ENCODE measurements at regions of chr12 and their contacts with region 1.

Region 1: DNA sequence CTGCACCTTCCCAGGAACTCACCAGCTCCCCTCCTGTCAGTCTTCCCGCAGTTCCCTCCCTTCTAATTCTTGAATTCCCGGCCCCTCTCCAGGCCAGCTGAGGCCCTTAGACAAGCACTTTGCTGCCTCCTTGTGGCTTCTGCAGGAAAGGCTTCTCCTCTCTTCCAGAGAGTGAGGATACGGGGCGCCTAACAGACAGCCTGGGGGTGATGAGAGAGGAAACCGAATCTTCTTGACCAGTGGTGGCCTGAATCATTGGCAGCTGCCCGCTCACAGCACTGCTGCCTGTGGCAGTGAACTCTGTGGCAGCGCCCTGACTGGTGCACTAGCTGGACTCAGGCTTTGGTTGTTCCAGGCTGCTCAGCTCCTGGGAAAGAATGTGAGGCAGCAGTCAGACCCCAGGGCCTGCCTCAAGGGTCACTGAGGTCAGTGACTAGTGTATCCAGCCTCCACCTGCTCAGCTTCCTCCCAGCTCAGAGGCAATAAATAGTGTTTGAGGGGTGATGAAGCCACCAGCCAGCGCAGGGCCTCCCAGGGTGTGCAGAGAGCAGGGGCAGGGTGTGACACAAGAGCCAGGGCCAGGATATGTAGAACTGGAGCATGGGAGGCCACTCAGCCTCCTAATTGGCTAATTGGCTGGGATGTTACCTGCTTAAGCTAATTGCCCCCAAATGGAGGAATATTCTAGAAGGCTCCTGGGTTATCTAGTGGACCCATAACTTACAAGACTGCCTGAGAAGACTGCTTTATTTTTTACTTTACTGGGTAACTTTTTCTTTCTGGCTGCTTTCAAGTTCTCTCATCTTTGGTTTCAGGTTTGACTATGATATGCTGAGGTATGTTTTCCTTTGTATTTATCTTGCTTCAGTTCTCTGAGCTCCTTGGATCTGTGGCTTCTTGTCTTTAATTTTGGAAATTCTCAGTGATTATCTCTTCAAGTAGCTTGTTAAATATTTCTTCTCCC is 12.9 kb upstream of the MCRS1 start:
- DNase-seq: no peak
- ATAC-seq: peak; percentile 92
- H3K4me3 ChIP-seq: peak overlapping the region; percentile 57; the same call in 1 of the 2 replicates
- H3K27ac ChIP-seq: peak overlapping the region; percentile 41
- H3K4me1 ChIP-seq: peaks cover 17% of the 10 kb centered on the region
- H3K27me3 ChIP-seq: no peaks in the 10 kb centered on the region
- CTCF ChIP-seq: peak; percentile 89 to 92 (median 90)
- EP300 ChIP-seq: no peak
- POLR2A ChIP-seq: no peak
- RAD21 ChIP-seq: peak; percentile 88

Region 2: DNA sequence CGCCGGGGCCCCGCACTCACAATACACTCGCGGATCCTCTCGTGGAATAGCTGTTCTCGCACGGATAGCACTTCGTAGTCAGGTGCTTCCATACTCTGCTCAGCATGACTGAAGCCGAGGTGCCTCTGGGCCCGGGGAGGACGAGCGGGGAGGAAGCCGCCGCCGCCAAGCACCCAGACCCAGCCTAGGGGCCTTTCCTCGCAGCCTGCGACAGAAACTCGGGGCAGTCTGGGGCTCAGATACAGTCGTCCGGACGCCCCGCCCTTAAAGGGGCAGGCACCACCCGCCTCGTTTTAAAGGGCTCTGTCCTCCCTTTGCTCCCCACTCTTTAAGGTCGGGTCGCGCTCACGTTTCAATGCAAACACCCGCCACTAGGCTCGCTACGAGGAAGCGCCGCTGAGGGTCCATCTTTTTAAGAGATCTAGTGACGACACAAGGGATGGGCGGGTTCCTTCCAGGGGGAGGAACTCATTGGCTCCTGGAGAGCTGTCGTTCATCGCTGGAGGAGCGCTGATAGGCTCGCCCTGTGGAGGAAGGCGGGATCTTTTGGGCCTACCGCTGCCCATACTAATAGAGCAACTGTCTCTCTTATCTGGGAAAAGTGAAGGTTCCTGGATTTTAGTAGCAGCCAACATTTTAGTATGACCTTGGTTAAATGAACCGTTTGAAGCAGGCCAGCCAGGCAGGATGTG is 470.2 kb before region 1 on chr12 and contains the start of gene LMBR1L:
- CTCF ChIA-PET with region 1: no interaction called
- POLR2A ChIA-PET with region 1: no interaction called
- RAD21 ChIA-PET with region 1: no interaction called
- SMC1A ChIA-PET with region 1: no interaction called
- in situ Hi-C with region 1: no loop called
- intact Hi-C with region 1: no loop called
- DNase-seq: peak; percentile 93
- ATAC-seq: peak; percentile 98
- H3K4me3 ChIP-seq: peak within 1 kb of the TSS; percentile 87
- H3K27ac ChIP-seq: peak within 1 kb of the TSS; percentile 70
- H3K4me1 ChIP-seq: peaks cover 9% of the 10 kb centered on the region
- H3K27me3 ChIP-seq: no peaks in the 10 kb centered on the region
- CTCF ChIP-seq: peak; percentile 36 to 60 (median 50); a peak in 5 of 6 replicates
- EP300 ChIP-seq: no peak
- POLR2A ChIP-seq: peak; percentile 91
- RAD21 ChIP-seq: 0 out of 2 replicates have a peak, but pooled peaks have one; percentile 32
- polyA plus RNA-seq, gene LMBR1L: 2.1 to 2.8 TPM

Region 3: GRCh38 chr12:49298160-49298559 is 282.7 kb before region 1 on chr12:
- CTCF ChIA-PET with region 1: no interaction called
- POLR2A ChIA-PET with region 1: no interaction called
- RAD21 ChIA-PET with region 1: no interaction called
- SMC1A ChIA-PET with region 1: no interaction called
- in situ Hi-C with region 1: no loop called
- intact Hi-C with region 1: no loop called
- DNase-seq: no peak
- ATAC-seq: peak; percentile 31
- H3K4me3 ChIP-seq: no peak overlapping the region
- H3K27ac ChIP-seq: no peak overlapping the region
- H3K4me1 ChIP-seq: peaks cover 8% of the 10 kb centered on the region
- H3K27me3 ChIP-seq: peaks cover 19 to 20% of the 10 kb centered on the region in 2 experiments
- CTCF ChIP-seq: peak in 2 of 3 experiments; percentile 25 to 26; a peak in 3 of 6 replicates
- EP300 ChIP-seq: no peak
- POLR2A ChIP-seq: no peak
- RAD21 ChIP-seq: peak; percentile 14; the same call in 1 of the 2 replicates

Region 4: DNA sequence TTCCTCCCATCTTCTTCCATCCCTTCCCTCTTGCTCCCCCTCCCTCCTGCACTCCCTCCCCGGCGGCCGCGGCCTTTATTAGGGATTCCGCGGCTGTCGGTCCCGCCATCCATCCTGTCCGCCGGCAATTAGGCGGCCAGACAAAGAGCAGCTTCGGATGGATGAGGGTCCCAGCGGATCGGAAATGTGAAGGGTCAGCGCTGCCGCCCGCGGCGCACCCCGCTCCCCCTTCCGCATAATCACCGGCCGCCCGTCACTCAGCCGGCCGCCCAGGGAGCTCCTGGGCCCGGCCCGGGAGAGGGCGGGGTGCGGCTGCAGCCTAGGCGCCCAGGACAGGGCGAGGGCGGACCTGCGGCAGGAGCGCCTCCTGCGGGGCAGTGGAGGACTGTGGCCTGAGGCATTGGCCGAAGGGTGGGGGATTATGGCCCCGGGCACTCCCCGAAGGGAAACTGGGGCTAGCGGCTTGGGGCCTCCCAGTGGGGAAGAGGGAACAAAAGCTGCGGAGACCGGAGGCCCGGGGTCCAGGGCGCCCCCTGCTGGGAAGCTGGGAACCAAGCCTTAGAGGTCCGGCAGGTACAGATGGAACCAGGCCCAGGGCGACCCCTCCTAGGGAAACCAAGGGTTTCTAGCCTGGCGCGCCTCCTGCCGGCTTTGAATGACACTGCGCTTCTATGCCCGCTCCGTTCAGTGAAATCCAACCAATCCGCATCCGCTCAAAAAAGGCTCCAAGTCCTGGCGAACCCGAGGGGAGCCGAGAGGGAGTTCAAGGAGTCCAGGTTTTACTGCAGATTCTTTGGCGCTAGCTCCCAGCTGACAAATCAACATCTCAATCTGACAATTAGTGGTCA is 238.6 kb before region 1 on chr12:
- CTCF ChIA-PET with region 1: interaction called, 12 read pairs
- POLR2A ChIA-PET with region 1: no interaction called
- RAD21 ChIA-PET with region 1: no interaction called
- SMC1A ChIA-PET with region 1: interaction called, 4 read pairs
- in situ Hi-C with region 1: no loop called
- intact Hi-C with region 1: no loop called
- DNase-seq: no peak
- ATAC-seq: peak; percentile 80
- H3K4me3 ChIP-seq: peak overlapping the region; percentile 8; the same call in 1 of the 2 replicates
- H3K27ac ChIP-seq: no peak overlapping the region
- H3K4me1 ChIP-seq: peaks cover 32% of the 10 kb centered on the region
- H3K27me3 ChIP-seq: peaks cover 24 to 33% of the 10 kb centered on the region in 2 experiments
- CTCF ChIP-seq: peak; percentile 72 to 91 (median 91)
- EP300 ChIP-seq: no peak
- POLR2A ChIP-seq: no peak
- RAD21 ChIP-seq: peak; percentile 44; the same call in 1 of the 2 replicates

Region 5: DNA sequence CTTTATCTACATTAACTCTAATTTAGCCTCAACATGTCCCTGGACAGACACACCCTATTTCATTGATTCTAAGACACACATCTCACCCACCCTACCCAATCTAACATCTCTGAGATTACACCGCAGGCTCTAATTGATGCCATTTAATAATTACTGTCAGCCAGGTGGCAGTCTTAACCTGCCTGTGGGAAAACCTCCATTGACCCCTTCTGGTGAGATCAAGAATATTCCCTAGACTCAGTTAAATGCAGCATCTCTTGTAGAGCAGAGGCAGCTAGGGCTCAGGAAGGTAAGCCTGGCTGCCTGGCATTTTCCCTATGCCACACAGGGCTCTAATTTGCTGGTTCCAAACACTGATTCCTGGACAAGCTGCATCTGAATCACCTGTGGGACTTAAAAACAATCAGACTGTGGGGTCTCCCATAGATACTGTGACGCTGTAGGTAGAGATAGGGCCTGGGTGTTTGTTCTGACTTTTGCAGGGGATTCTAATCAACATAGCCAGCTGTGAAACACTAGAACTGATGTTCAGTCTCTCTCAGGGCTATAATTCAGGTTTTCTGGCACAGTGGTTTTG is 27.3 kb before region 1 on chr12:
- CTCF ChIA-PET with region 1: interaction called, 42 read pairs
- POLR2A ChIA-PET with region 1: no interaction called
- RAD21 ChIA-PET with region 1: interaction called, 7 read pairs
- SMC1A ChIA-PET with region 1: interaction called, 18 read pairs
- in situ Hi-C with region 1: no loop called
- intact Hi-C with region 1: no loop called
- DNase-seq: no peak
- ATAC-seq: peak; percentile 79
- H3K4me3 ChIP-seq: no peak overlapping the region
- H3K27ac ChIP-seq: no peak overlapping the region
- H3K4me1 ChIP-seq: no peaks in the 10 kb centered on the region
- H3K27me3 ChIP-seq: peaks cover 0 to 6% of the 10 kb centered on the region in 2 experiments; a peak in 2 of 4 replicates
- CTCF ChIP-seq: peak; percentile 57 to 89 (median 58); a peak in 5 of 6 replicates
- EP300 ChIP-seq: no peak
- POLR2A ChIP-seq: no peak
- RAD21 ChIP-seq: peak; percentile 73

Region 6: DNA sequence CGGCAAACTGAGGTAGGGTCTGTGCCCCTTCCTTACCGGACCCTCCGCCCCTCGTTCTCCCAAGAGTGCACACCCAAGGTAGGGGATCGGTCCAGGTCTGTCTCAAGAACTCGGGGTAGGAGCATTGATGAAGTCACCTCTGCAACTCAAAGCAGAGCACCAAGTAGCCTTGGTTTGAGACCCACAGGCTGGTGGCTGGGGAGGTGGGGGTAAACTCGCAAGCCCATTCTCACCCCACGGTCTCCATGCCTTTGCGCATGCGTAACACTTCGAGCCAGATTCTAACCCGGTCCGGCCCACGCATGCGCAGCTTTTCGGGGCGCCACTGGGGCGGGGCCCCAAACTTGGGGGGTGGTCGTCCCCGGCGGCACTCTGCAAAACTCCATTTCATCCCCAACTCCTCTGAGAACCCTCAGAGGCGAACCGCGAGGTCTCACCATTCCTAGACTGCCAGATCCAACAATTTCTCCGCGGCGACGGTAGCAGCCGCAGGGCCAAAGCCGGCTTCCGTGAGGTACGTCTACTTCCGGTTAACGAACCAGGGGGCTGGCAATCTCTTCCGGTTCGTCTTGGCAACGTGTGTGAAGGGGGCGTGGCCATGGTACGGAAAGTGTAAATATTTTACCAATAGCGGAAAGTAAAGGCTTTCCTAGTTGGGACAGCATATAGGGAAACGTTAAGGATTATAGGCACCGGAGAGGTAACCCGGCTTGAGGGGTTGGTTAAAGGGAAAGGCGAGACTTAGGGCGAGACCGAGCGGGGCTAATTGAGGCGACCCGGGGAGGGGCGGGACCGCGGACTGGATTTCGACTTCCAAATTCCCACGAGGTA is 13.0 kb before region 1 on chr12 and contains the start of gene MCRS1:
- CTCF ChIA-PET with region 1: interaction called, 19 read pairs
- POLR2A ChIA-PET with region 1: interaction called, 4 read pairs
- RAD21 ChIA-PET with region 1: interaction called, 3 read pairs
- SMC1A ChIA-PET with region 1: interaction called, 21 read pairs
- in situ Hi-C with region 1: no loop called
- intact Hi-C with region 1: no loop called
- DNase-seq: peak; percentile 80
- ATAC-seq: peak; percentile 92
- H3K4me3 ChIP-seq: peak within 1 kb of the TSS; percentile 99
- H3K27ac ChIP-seq: peak within 1 kb of the TSS; percentile 91
- H3K4me1 ChIP-seq: peaks cover 8% of the 10 kb centered on the region
- H3K27me3 ChIP-seq: no peaks in the 10 kb centered on the region
- CTCF ChIP-seq: no peak
- EP300 ChIP-seq: no peak
- POLR2A ChIP-seq: peak; percentile 98
- RAD21 ChIP-seq: no peak
- polyA plus RNA-seq, gene MCRS1: 34.3 to 52.4 TPM

Region 7: GRCh38 chr12:49623142-49623904 is 42.5 kb after region 1 on chr12 and contains the start of gene PRPF40B:
- CTCF ChIA-PET with region 1: interaction called, 48 read pairs
- POLR2A ChIA-PET with region 1: interaction called, 13 read pairs
- RAD21 ChIA-PET with region 1: interaction called, 23 read pairs
- SMC1A ChIA-PET with region 1: interaction called, 19 read pairs
- in situ Hi-C with region 1: no loop called
- intact Hi-C with region 1: loop called (anchors 2 kb)
- DNase-seq: peak; percentile 36
- ATAC-seq: peak; percentile 87
- H3K4me3 ChIP-seq: peak within 1 kb of the TSS; percentile 85
- H3K27ac ChIP-seq: peak within 1 kb of the TSS; percentile 75
- H3K4me1 ChIP-seq: peaks cover 17% of the 10 kb centered on the region
- H3K27me3 ChIP-seq: no peaks in the 10 kb centered on the region
- CTCF ChIP-seq: peak; percentile 33 to 66 (median 57)
- EP300 ChIP-seq: no peak
- POLR2A ChIP-seq: peak; percentile 90
- RAD21 ChIP-seq: peak; percentile 40; the same call in 1 of the 2 replicates
- polyA plus RNA-seq, gene PRPF40B: 0.31 to 1.2 TPM

Measured in GM12878 (cell line).